Mammary epithelial cell (primary cell): ENCODE measurements at regions of chr10 and their contacts with region 1.

Region 1: DNA sequence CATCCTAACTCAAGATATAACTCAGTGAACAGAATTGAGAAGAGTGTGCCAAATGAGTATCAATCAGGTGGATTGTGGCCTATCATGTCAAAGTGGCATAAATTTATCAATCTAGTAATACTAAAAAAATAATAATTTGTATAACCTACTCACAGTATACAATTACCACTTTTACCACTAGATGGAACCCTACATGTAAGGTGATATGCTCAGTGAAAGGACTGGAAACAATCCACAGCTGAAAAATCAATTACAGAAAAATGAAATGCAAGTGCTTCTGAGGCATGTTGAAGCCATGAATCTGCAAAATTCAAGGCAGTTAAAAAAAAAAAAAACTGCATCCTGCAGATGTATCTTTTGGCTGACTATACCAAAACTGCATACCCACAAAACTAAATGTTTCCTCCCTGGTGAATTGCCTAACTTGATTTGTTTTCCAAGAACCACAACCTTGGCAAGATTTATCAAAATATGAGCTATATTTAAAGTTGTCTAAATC is 13.9 kb downstream of the ARHGAP19 start:
- DNase-seq: peak; percentile 36
- H3K4me3 ChIP-seq: no peak overlapping the region
- H3K27ac ChIP-seq: no peak overlapping the region
- H3K4me1 ChIP-seq: no peaks in the 10 kb centered on the region
- H3K27me3 ChIP-seq: no peaks in the 10 kb centered on the region
- CTCF ChIP-seq: peak; percentile 49 to 58

Region 2: GRCh38 chr10:96765406-96766240 is 512.9 kb before region 1 on chr10:
- CTCF ChIA-PET with region 1: no interaction called
- dilution Hi-C with region 1: no loop called
- in situ Hi-C with region 1: no loop called
- intact Hi-C with region 1: no loop called
- DNase-seq: peak; percentile 47
- H3K4me3 ChIP-seq: no peak overlapping the region
- H3K27ac ChIP-seq: no peak overlapping the region
- H3K4me1 ChIP-seq: no peaks in the 10 kb centered on the region
- H3K27me3 ChIP-seq: no peaks in the 10 kb centered on the region
- CTCF ChIP-seq: peak; percentile 86 to 91

Region 3: DNA sequence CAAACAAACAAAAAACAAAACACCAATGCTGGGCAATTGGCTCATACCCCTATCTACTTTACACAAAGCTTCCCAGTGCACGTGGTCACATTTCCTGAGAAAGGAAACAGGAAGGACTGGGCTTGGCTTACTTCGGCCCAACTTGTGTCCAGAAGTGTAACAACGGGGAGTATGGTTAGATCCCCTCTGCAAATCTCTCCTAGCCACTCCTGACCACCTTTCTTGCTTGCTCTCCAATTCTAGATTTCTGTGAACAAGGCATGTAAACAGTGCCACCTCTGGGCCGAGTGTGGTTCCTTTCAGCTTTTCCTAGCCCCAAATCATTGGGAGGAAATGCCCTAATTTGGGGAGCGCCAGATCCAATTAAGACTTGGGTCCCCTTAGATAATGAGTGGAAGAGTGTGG is 77.0 kb after region 1 on chr10:
- CTCF ChIA-PET with region 1: no interaction called
- dilution Hi-C with region 1: no loop called
- in situ Hi-C with region 1: no loop called
- intact Hi-C with region 1: loop called (anchors 2 kb)
- DNase-seq: no peak
- H3K4me3 ChIP-seq: no peak overlapping the region
- H3K27ac ChIP-seq: no peak overlapping the region
- H3K4me1 ChIP-seq: no peaks in the 10 kb centered on the region
- H3K27me3 ChIP-seq: no peaks in the 10 kb centered on the region
- CTCF ChIP-seq: peak in 1 of 2 donors; percentile 38